Activated naive CD4-positive, alpha-beta T cell treated with anti-CD3 and anti-CD28 coated beads for 36 hours (primary cell): ENCODE measurements at regions of chr14 and their contacts with region 1.

Region 1: DNA sequence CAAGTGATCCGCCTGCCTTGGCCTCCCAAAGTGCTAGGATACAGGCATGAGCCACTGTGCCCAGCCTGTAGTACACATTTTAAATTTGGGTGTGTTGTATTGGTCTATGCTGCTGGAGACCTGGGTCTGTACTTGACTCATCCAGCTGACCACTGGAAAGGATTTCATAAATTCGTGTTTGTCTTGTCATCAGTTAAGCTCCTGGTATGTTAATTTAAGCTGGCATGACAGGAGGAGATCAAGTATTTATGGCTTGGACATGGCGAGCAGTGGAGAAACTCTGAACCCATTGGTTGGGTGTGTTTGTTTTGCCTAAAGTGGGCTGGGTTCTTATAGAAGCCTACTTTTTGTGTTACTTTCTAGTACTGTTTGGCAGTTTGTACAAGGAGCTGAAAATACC is 24.2 kb downstream of the YY1 start:
- DNase-seq: no peak
- H3K4me3 Mint-ChIP-seq: no peak overlapping the region
- H3K27ac Mint-ChIP-seq: peak overlapping the region; percentile 37
- H3K4me1 Mint-ChIP-seq: peaks cover 81% of the 10 kb centered on the region
- H3K27me3 Mint-ChIP-seq: no peaks in the 10 kb centered on the region

Region 2: DNA sequence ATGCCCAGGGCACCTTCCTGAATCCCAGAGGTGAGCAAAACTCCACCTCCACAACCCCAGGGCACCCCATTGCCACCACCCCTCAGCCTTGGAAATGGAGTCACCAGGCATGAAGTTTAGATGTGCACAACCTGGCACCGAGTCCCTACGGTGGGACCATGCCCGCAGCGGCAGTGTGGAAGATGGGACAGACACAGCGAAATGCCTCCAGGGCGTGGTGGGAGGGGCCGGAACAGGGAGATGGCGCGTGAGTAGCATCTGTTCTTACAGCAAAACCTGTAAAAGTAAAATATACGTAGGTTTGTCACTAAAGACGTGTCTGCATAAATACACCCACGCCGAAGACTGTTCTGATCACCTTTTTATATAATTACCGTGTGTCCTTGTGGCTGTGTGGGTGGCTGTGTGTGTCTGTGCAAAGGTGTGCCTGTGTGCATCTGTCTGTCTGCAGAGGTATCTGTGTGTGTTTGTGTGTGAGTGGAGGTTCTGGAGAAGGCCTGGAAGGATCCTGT is 86.3 kb before region 1 on chr14:
- CTCF ChIA-PET with region 1: no interaction called
- intact Hi-C with region 1: no loop called
- DNase-seq: no peak
- H3K4me3 Mint-ChIP-seq: no peak overlapping the region
- H3K27ac Mint-ChIP-seq: no peak overlapping the region
- H3K4me1 Mint-ChIP-seq: no peaks in the 10 kb centered on the region
- H3K27me3 Mint-ChIP-seq: no peaks in the 10 kb centered on the region

Region 3: DNA sequence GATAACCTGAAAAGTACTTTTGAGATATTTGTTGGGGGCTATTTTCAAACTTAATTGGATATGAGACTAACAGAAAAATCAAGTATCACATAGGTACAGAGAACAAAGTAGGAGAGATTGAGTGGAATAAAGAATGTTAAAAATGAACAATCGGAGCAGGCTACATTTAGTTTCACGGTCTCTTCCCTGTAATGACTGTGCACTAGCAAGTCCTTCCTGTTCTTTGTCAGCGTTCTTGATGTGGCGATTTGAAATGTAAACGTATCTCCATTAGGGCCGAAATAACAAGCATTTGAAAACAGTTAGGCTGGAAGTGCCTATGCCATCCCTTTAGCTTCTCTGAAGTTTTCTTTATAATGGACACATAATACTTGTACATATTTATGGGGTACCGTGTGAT is 12.1 kb after region 1 on chr14:
- CTCF ChIA-PET with region 1: interaction called, 5 read pairs
- intact Hi-C with region 1: loop called (anchors 2 kb)
- DNase-seq: no peak
- H3K4me3 Mint-ChIP-seq: no peak overlapping the region
- H3K27ac Mint-ChIP-seq: peak overlapping the region; percentile 21
- H3K4me1 Mint-ChIP-seq: peaks cover 43% of the 10 kb centered on the region
- H3K27me3 Mint-ChIP-seq: no peaks in the 10 kb centered on the region

Region 4: DNA sequence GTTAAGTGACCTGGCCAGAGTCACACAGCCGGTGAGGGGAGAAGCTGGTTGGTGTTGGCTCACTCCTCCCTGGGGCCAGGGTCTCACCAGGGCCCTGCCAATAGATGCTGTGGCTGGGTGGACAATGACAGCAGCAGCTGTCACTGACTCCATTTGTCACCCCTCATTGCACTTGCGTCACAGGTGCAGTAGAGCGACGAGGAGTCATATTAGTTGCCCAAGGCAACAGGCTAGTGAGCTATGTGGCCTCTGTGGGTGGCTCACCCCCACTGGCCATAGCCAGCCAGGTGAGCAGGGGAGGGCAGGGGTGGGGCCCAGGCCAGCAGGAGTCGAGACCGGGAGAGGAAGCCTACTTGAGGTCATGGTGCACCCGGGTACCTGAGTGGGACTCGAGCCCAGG is 69.7 kb after region 1 on chr14:
- CTCF ChIA-PET with region 1: no interaction called
- intact Hi-C with region 1: no loop called
- DNase-seq: no peak
- H3K4me3 Mint-ChIP-seq: no peak overlapping the region
- H3K27ac Mint-ChIP-seq: no peak overlapping the region
- H3K4me1 Mint-ChIP-seq: peaks cover 12% of the 10 kb centered on the region
- H3K27me3 Mint-ChIP-seq: no peaks in the 10 kb centered on the region